ENCODE measurements at regions of chr7 and their contacts with region 1.

Region 1: GRCh38 chr7:87411186-87411585 is 64.3 kb downstream of the ABCB4 start:
- DNase-seq: no peak
- CTCF ChIP-seq: no peak

Region 2: DNA sequence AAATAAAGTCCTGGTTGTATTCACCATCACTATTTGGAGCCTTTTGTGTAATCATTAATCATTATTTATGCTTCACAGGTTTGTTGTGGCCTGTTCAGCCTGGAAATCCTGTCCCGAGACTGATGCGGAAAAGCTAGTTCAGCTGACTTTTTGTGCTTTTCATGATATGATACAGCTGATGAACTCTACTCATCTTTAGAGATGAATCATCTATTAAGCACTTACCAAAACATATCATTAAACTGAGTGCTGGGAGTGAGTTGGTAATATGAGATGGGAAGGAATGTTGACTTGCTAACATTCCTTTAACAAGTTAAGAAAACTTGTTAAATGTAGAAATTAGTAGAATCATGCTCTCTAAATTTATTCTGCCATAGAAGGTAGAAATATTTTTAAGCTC is 12.7 kb before region 1 on chr7:
- CTCF ChIA-PET with region 1: interaction called, 82 read pairs
- POLR2A ChIA-PET with region 1: no interaction called
- DNase-seq: no peak
- CTCF ChIP-seq: no peak

Region 3: DNA sequence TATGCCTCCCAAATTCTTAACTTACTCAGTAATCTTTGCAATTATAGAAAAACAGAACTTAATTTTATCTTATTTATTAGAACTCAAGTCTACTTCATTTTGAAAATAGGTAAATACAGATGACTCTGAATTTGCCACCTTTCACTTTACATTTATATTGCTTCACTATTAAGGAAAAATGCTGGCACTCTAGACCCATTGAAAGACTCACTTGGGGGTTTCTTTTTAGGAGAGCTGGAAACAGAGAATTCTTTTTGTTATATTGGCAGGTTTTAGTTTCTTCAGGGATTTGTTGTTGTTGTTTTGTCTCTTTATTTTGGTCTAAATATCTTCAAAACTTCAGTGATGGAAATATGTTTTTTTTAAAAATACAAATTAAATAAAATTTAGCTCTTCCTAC is 328.1 kb after region 1 on chr7:
- CTCF ChIA-PET with region 1: no interaction called
- POLR2A ChIA-PET with region 1: no interaction called
- DNase-seq: no peak
- CTCF ChIP-seq: no peak